ENCODE measurements at regions of chr1 and their contacts with region 1.

Region 1: DNA sequence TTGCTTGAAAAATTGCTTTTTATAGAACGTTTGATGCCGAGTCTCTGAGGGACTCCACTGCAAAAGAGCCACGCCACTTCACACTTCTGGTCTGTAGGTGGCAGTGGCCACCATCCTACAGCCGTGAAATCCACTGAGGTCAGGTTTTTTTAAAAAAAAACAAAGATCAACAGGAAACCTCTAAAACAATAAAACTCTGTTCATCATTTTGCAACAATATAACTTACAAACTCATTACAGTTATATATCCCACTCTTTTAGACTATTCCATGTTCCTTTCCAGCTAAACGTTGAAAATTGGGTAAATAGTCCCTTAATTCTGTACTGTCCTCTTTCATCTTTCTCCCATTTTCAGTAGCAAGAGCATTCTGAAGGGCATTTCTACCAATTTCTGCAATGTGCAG is 64.6 kb upstream of the FMN2 start:
- DNase-seq: peak; percentile 16
- H3K4me3 ChIP-seq: no peak overlapping the region
- H3K27ac ChIP-seq: no peak overlapping the region
- H3K4me1 ChIP-seq: no peaks in the 10 kb centered on the region
- H3K27me3 ChIP-seq: no peaks in the 10 kb centered on the region
- CTCF ChIP-seq: peak; percentile 67

Region 2: DNA sequence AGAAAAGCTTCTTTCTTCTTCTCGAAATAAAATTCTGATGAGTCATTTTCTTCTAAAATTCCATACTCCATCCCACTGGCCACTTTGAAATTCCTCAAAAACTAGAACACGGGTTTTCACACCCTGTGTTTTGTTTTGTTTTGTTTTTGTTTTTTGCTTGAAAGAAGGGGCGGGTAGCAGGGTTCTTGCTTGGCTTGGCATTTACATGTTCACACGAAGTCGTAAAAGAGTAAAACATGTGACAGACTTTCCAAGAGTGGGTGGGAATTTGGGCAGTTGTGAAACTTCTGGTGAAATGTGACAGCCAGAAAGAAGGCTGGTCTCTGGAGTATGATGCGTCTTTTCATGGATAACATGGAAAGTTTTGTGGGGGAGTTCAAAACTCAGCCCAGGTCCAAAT is 17.6 kb after region 1 on chr1:
- CTCF ChIA-PET with region 1: interaction called, 12 read pairs
- POLR2A ChIA-PET with region 1: no interaction called
- intact Hi-C with region 1: no loop called
- DNase-seq: no peak
- H3K4me3 ChIP-seq: no peak overlapping the region
- H3K27ac ChIP-seq: no peak overlapping the region
- H3K4me1 ChIP-seq: no peaks in the 10 kb centered on the region
- H3K27me3 ChIP-seq: no peaks in the 10 kb centered on the region
- CTCF ChIP-seq: no peak

Region 3: DNA sequence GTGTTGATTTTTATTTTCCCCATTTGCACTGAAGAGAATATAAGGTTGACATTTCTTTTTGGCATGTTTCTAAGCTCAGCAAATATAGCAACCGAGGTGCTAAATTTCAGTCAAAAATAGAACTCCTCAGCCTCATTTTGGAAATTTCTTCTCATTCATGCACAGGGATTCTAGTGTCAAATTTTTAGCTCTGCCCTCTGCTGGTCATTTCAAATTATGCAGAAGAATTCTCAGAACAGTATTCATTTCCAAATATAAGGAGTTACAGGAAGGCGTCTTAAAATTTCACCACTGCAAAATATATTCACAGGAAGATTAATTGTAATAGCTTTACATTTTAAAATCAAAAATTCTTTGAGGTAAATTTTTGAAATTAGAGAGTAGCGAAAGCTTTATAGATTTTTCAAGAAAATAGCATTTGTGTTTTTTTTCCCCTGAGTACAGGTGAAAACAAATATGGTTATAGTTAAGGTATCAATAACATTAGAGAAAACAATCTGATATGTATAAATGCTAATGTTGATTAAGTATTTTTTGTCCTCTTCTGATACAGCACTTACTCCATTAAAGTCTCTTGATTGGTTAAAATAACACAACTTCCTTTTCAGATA is 122.5 kb after region 1 on chr1:
- CTCF ChIA-PET with region 1: no interaction called
- POLR2A ChIA-PET with region 1: no interaction called
- intact Hi-C with region 1: loop called (anchors 1 kb)
- DNase-seq: peak; percentile 24
- H3K4me3 ChIP-seq: no peak overlapping the region
- H3K27ac ChIP-seq: no peak overlapping the region
- H3K4me1 ChIP-seq: no peaks in the 10 kb centered on the region
- H3K27me3 ChIP-seq: no peaks in the 10 kb centered on the region
- CTCF ChIP-seq: peak; percentile 51

Region 4: DNA sequence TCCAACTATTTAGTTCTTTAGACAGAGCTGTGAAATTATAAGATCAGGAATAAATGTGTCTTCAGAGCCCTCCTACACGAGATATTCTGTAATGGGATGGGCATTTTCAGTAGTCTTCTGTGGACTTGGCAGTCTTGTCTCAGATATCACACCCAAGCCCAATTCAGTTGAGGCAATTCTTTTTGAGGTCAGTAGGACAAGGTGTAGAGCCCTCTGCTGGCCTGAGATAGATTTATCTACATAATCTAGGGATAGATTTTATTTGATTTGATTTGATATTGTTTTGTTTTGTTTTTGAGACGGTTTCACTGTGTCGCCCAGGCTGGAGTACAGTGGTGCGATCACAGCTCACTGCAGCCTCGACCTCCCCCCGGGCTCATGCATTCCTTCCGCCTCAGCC is 142.1 kb after region 1 on chr1:
- CTCF ChIA-PET with region 1: no interaction called
- POLR2A ChIA-PET with region 1: no interaction called
- intact Hi-C with region 1: loop called (anchors 5 kb)
- DNase-seq: peak; percentile 1
- H3K4me3 ChIP-seq: no peak overlapping the region
- H3K27ac ChIP-seq: no peak overlapping the region
- H3K4me1 ChIP-seq: no peaks in the 10 kb centered on the region
- H3K27me3 ChIP-seq: no peaks in the 10 kb centered on the region
- CTCF ChIP-seq: peak; percentile 26; the same call in 1 of the 2 replicates

Region 5: GRCh38 chr1:240189386-240189989 is 162.4 kb after region 1 on chr1:
- CTCF ChIA-PET with region 1: no interaction called
- POLR2A ChIA-PET with region 1: no interaction called
- intact Hi-C with region 1: loop called (anchors 2 kb)
- DNase-seq: peak; percentile 30
- H3K4me3 ChIP-seq: no peak overlapping the region
- H3K27ac ChIP-seq: no peak overlapping the region
- H3K4me1 ChIP-seq: no peaks in the 10 kb centered on the region
- H3K27me3 ChIP-seq: peaks cover 7% of the 10 kb centered on the region
- CTCF ChIP-seq: peak; percentile 58

Region 6: GRCh38 chr1:240555524-240555923 is 528.5 kb after region 1 on chr1:
- CTCF ChIA-PET with region 1: no interaction called
- POLR2A ChIA-PET with region 1: no interaction called
- intact Hi-C with region 1: no loop called
- DNase-seq: no peak
- H3K4me3 ChIP-seq: no peak overlapping the region
- H3K27ac ChIP-seq: no peak overlapping the region
- H3K4me1 ChIP-seq: no peaks in the 10 kb centered on the region
- H3K27me3 ChIP-seq: peaks cover 3% of the 10 kb centered on the region
- CTCF ChIP-seq: no peak

Measured in A673 (cell line).